Spleen (tissue), 13 donors: ENCODE measurements at regions of chr11 and their contacts with region 1.

Region 1: GRCh38 chr11:121591405-121592033 is 138.8 kb upstream of the SORL1-AS1 start:
- DNase-seq: no peak
- H3K4me3 ChIP-seq: no peak overlapping the region
- H3K27ac ChIP-seq: no peak overlapping the region
- H3K4me1 ChIP-seq: peaks cover 4 to 37% (median 25%) of the 10 kb centered on the region in 6 donors
- H3K27me3 ChIP-seq: no peaks in the 10 kb centered on the region
- CTCF ChIP-seq: peak; percentile 70 to 93 (median 87)
- POLR2A ChIP-seq: no peak

Region 2: GRCh38 chr11:121249039-121249663 is 342.4 kb before region 1 on chr11:
- intact Hi-C with region 1: loop called (anchors 2 kb)
- DNase-seq: no peak
- H3K4me3 ChIP-seq: no peak overlapping the region
- H3K27ac ChIP-seq: no peak overlapping the region
- H3K4me1 ChIP-seq: no peaks in the 10 kb centered on the region
- H3K27me3 ChIP-seq: no peaks in the 10 kb centered on the region
- CTCF ChIP-seq: peak; percentile 53 to 81 (median 77)
- POLR2A ChIP-seq: no peak

Region 3: DNA sequence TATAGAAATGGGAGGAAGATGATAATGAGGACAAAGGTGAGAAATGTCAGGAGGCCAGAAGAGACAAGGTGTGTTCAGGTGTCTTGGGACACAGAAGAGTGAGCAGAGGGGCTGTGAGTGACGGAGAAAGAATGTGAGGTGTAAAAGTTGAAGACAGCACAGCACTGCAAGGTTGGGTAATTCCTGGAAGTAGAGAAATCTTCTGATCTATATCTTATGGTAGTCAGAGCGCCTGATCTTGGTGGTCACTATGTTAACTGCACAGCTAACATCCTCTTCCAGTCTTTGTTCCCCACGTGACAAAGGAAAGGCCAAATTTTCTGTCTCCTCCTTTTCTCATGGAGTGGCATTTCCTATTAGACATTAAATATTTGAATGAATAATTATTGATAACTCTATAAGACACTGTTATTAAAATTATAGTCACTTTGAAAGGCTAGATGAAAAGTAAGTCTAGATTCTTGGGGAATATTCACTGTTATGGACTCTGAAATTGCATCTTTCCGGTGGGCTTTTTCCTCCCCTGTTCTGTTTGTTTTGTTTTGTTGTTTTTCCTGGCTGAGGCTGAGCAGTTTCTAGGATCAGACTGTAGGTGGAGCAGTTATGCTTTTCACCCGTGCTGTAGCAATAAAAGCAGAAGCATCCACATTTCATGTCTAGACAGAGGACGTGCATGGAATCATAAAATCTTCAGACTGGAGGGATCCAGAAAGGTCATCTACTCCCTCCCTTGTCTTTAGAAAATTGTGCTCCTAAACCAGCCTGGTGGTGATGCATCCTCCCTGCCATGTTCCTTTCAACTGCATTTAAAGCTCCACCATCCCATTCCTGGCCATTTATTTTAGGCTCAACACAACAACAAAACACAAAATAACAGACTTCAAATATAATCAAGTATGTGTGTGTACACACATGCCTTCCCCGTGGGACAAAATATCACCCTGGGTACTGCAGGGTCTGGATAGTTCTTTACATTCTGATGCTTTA is 272.4 kb before region 1 on chr11:
- intact Hi-C with region 1: loop called (anchors 5 kb)
- DNase-seq: no peak
- H3K4me3 ChIP-seq: no peak overlapping the region
- H3K27ac ChIP-seq: no peak overlapping the region
- H3K4me1 ChIP-seq: peaks cover 0 to 20% (median 2%) of the 10 kb centered on the region in 6 donors
- H3K27me3 ChIP-seq: no peaks in the 10 kb centered on the region
- CTCF ChIP-seq: peak; percentile 51 to 88 (median 78)
- POLR2A ChIP-seq: no peak